ENCODE measurements at regions of chr20 and their contacts with region 1.

Region 1: DNA sequence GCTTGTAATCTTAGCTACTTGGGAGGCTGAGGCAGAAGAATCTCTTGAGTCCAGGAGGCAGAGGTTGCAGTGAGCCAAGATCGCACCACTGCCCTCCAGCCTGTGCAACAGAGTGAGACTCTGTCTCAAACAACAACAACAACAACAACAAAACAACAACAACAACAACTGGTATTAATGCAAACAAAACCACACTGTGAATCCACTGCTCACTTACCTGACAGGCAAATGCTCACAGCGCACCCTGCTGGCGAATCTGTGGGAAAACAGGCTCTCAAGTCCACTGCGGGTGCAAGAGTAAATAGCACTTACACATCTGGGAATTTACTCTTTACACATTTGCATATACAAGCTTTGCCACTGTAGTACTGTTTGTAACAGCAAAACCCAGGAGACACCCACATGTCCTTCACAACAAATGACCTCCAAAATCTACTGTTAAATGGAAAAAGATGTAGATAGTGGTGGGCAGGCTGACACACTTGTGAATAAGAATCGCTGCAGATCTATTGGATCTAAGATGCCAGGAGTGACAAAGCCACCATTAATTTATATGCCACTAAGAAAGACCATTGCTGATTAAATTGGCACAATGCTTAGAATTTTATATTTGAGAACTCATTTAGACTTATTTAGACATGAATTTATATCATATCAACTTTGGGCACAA is 29.3 kb downstream of the NSFL1C start:
- DNase-seq: peak; percentile 64 to 88 (median 78)
- H3K4me3 ChIP-seq: no peak overlapping the region
- H3K27ac ChIP-seq: no peak overlapping the region
- H3K4me1 ChIP-seq: no peaks in the 10 kb centered on the region
- H3K27me3 ChIP-seq: no peaks in the 10 kb centered on the region
- CTCF ChIP-seq: peak; percentile 83

Region 2: DNA sequence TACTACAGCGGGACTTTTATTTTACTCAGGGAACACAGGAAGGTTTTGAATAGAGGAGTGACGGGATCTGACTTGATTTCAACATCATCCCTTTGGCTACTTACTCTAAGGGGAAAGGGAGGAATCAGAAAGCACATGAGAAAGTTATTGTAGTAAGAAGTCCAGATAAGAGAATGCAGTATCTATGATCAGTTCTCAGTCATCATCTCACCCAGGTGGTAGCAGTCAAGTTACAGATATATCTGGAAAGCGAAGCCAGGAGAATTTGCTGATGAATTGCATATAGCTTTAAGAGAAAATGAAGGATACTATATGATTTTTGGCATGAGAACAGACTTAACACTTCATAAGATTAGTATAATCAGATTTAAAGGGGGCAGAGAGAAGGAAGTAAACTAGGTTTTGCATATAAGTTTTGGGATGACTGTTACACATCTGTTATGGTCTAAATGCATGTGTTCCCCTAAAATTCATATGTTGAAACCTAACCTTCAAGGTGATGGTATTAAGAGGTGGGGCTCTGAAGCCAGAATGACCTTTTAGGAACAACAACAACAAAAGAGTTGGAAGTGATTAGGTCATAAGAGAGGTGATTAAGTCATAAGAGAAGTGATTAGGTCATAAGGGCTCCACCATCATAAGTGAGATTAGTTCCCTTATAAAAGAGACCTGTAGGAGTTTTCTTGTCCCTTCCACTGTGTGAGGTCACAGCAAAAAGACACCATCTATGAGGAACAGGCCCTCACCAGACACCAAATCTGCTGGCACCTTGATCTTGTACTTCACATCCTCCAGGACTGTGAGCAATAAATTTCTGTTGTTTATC is 204.9 kb before region 1 on chr20:
- intact Hi-C with region 1: no loop called
- DNase-seq: no peak
- H3K4me3 ChIP-seq: no peak overlapping the region
- H3K27ac ChIP-seq: no peak overlapping the region
- H3K4me1 ChIP-seq: no peaks in the 10 kb centered on the region
- H3K27me3 ChIP-seq: peaks cover 12% of the 10 kb centered on the region
- CTCF ChIP-seq: no peak

Region 3: DNA sequence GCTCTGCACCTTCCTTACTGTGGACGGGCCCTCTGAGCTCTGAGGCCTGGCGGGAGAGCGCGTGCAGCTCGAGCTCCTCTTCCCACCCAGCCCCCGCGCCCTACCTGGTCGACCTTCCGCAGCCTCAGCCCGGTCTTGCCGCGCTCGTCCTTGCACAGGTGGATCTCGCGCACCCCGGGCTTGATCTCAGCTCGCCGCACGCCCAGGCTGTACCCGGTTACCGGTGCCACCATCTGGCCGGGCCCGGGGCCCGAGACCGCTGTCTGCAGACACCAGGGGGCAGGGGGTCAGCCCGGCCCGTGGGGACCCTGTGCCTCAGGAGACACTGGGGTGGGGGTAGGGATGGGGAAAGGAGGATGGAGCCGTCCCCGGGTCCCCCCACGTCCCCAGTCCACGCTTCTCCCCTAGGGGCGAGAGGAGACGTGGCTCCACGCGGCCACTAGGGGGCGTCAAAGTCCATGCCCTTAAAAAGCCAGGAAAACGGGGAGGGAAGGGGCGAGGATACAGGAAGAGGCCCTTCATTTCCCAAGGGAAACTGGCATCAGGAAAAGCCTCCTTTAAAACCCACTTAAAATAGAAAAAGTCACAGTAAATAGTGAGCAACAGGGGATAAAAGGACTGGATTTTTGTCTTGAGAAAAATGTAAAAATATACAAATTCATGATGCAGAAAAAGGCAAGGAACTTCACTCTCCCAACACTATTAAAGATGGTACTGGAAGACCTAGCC is 124.0 kb before region 1 on chr20:
- intact Hi-C with region 1: loop called (anchors 5 kb)
- DNase-seq: peak; percentile 80 to 92 (median 82)
- H3K4me3 ChIP-seq: no peak overlapping the region
- H3K27ac ChIP-seq: no peak overlapping the region
- H3K4me1 ChIP-seq: no peaks in the 10 kb centered on the region
- H3K27me3 ChIP-seq: no peaks in the 10 kb centered on the region
- CTCF ChIP-seq: peak; percentile 94

Region 4: GRCh38 chr20:1478576-1478975 is 41.2 kb after region 1 on chr20:
- intact Hi-C with region 1: no loop called
- DNase-seq: no peak
- H3K4me3 ChIP-seq: no peak overlapping the region
- H3K27ac ChIP-seq: no peak overlapping the region
- H3K4me1 ChIP-seq: no peaks in the 10 kb centered on the region
- H3K27me3 ChIP-seq: no peaks in the 10 kb centered on the region
- CTCF ChIP-seq: no peak

Region 5: GRCh38 chr20:1500491-1501275 is 63.3 kb after region 1 on chr20:
- intact Hi-C with region 1: no loop called
- DNase-seq: no peak
- H3K4me3 ChIP-seq: no peak overlapping the region
- H3K27ac ChIP-seq: no peak overlapping the region
- H3K4me1 ChIP-seq: no peaks in the 10 kb centered on the region
- H3K27me3 ChIP-seq: no peaks in the 10 kb centered on the region
- CTCF ChIP-seq: no peak

Measured in kidney (tissue), 22 donors.